ENCODE measurements at regions of chr15 and their contacts with region 1.

Region 1: DNA sequence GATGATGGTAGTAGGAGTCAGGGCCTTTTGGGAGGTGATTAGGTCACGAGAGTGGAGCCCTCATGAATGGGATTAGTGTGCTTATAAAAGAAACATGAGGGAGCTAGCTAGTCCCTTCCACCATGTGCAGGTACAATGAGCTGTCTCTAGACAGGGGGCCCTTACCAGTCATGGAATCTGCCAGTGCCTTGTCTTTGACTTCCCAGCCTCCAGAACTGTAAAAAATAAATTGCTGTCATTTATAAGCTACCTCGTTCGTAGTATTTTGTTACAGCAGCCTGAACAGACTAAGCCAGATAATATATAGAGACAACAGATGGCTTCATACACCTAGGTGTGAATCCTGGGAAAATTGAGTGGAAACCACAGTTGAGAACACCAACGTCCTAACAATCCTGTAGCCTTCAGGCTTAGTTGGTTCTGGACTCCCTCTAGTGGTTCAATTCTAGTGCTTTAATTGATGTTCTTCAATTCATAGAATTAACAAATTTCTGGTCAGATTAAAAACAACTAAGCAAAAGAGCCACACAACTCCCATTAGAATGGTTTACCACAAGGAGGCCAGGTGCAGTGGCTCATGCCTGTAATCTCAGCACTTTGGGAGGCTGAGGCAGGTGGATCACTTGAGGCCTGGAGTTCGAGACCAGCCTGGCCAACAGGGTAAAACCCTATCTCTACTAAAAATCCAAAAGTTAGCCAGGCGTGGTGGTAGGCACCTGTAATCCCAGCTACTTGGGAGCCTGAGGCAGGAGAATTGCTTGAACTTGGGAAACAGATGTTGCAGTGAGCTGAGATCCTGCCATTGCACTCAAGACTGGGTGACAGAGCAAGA is 21.3 kb upstream of the GATM start:
- DNase-seq: no peak
- ATAC-seq: no peak

Region 2: GRCh38 chr15:44593042-44593736 is 806.4 kb before region 1 on chr15:
- intact Hi-C with region 1: no loop called
- DNase-seq: no peak
- ATAC-seq: peak; percentile 34

Region 3: GRCh38 chr15:45162771-45163526 is 236.6 kb before region 1 on chr15:
- intact Hi-C with region 1: loop called in 1 of 2 experiments (anchors 5 kb)
- DNase-seq: peak; percentile 71 to 84
- ATAC-seq: peak; percentile 61

Region 4: DNA sequence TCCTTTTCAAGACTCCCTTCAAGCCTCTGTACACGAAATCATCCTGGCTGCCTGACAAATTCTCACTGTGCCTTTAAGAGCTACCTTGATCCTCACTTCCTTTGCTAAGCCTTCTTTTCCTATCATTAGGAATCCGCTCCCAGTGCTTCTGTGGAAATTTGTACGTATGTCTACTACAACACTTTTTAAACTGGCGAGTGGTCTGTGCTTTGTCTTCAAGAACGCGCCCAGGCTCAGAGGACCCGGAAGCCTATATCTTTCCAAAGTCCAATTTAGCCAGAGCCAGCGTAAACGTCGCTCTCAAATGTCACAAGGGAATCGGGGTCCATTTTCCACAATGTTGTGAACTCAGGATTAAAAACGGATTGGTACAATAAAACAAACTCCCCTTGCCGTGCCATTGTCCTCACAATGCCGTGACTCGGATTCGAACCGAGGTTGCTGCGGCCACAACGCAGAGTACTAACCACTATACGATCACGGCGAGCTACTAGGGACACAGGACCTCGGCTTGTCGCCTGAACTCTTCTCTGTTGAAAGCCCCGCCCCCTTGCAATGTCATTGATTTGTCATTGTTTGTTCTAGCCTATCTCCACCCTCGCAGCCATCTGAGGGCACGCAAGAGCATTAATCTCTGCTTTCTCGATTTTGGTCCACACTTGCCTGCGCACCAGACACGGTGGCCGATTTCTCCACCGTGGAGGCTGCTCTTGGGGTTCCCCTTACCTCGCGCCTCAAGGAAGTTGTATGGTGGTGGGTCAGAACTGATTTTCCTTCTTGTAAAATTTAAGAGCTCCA is 199.4 kb before region 1 on chr15:
- intact Hi-C with region 1: loop called in 1 of 2 experiments (anchors 10 kb)
- DNase-seq: peak; percentile 96
- ATAC-seq: peak; percentile 69

Region 5: DNA sequence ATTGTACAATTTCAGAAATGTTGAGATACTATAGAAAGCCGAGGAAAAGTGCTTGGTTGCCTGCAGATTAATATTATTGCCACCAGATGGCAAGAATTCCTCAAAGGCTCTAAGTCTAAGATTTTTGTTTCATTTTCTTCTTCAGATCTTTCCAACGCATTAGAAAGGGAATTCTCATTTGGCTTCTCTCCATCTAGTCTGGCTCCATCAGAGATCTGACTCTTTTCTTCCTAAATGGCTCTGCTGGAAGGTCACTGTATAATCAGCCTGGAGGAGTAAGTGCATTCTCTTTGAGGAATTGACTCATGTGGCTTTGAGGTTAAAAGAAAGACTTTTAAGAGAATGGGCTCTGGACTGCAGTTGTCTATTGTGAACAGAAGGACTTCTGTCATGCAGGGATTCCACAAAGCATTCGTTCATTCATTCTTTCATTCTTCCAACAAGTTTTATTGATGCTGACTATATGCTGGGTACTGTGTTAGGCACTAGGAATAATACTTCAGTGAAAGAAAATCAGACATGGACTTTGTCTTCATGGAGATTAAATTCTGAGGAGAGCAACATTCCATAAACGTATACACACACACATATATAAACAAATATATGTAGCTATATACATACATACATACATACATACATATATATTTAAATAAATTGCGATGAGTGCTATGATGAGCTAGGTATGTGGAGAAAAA is 92.2 kb before region 1 on chr15:
- intact Hi-C with region 1: loop called in 1 of 2 experiments (anchors 5 kb)
- DNase-seq: no peak
- ATAC-seq: peak; percentile 82

Region 6: GRCh38 chr15:45529613-45530012 is 130.0 kb after region 1 on chr15:
- intact Hi-C with region 1: no loop called
- DNase-seq: peak in 1 of 2 donors; percentile 8
- ATAC-seq: peak; percentile 62

Region 7: DNA sequence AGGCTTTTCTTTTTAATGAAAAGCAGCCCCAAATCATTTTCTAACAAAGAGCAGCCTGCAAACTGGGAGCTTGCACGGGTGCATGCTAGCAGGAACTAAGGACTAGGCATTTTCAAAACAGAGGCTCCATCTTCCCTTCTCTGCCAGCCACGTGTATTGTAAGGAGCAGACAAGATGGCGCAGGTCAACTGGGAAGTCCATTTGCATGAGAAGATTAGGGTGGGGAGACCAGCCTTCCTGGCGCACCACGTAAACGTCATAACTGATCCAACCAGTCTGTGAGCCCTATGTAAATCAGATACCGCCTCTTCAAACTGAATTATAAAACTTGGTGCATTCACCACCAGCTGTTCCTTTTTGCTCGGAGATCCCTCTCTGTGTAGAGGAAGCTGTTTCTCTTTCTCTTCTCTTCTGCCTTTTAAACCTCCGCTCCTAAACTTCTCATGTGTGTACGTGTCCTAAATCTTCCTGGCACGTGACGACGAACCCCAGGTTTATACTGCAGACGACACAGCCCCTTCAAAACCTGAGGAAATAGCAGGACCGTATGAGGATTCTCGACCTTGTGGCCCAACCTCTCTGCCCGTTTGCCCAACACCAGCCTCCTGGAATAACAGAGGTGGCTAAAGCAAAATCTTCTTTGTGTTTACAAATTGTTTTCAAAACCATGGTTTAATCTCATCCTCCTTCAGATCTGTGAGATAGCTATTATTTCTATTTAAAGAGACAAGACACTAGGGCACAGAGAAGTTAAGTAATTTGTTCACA is 149.3 kb after region 1 on chr15:
- intact Hi-C with region 1: no loop called
- DNase-seq: no peak
- ATAC-seq: no peak

Region 8: GRCh38 chr15:45641374-45641781 is 241.8 kb after region 1 on chr15:
- intact Hi-C with region 1: no loop called
- DNase-seq: peak; percentile 44 to 70
- ATAC-seq: peak; percentile 70

Measured in left colon (tissue), 2 donors.